ENCODE measurements at regions of chr4 and their contacts with region 1.

Region 1: DNA sequence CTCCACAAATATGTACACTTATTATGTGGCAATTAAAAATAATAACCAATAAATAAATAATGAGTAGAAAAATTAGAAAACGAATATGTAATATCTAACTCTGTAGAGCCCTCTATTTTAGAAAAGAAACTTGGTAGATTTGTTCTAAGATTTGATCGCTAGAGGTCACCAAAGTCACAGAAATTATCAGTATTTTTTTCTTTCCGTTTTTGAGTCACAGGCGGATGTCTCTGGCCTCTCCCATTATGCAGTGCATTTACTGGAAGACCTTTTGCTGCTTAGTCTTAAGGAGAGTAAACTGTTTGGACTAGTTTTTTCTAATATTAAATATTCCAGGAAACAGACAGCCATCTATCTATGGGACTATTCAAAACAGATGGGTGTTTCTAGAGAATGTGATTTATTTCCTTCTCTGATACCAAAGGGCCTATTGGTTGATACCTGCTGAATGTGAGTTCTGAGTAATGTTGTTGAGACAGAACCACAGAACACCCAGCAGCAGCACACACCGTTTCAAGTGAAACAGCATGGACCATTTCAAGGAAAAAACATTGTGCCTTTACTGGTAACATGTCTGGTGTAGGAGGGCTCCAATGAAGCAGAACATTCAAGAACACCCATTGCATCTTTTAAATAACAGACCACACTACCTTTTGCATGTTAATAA is 34.0 kb upstream of the GYPA start:
- DNase-seq: peak; percentile 32
- H3K4me3 Mint-ChIP-seq: no peak overlapping the region
- H3K27ac Mint-ChIP-seq: peak overlapping the region; percentile 24
- H3K4me1 Mint-ChIP-seq: peaks cover 15% of the 10 kb centered on the region
- H3K27me3 Mint-ChIP-seq: peaks cover 4% of the 10 kb centered on the region

Region 2: DNA sequence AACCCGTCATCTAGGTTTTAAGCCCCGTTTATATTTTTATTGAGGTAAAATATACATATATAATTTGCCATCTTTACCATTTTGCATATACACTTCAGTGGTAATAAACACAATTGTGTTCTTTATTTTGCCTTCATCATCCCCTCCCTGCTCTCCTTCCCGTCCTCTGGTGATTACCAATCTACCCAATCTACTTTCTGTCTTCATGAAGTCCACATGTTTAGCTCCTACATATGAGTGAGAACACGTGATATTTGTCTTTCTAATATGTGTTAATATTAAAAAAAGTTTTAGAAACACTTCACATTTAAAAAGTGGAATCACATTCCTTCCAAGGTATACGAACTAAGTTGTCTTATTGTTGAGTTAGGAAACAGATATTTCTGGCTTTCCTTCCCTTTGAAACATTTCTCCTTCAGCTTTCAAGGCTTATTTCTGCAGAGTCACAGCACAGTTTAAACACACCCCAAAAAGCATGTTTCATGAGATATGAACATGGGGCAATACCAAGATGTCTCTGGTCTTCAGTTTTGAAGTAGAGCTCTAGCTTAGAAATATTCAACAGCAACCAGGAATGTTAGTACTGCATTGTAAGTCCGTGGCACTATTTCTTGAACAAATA is 69.9 kb before region 1 on chr4:
- CTCF ChIA-PET with region 1: no interaction called
- intact Hi-C with region 1: no loop called
- DNase-seq: no peak
- H3K4me3 Mint-ChIP-seq: no peak overlapping the region
- H3K27ac Mint-ChIP-seq: no peak overlapping the region
- H3K4me1 Mint-ChIP-seq: no peaks in the 10 kb centered on the region
- H3K27me3 Mint-ChIP-seq: peaks cover 7% of the 10 kb centered on the region

Region 3: GRCh38 chr4:144213371-144213770 is 38.8 kb after region 1 on chr4:
- CTCF ChIA-PET with region 1: no interaction called
- intact Hi-C with region 1: no loop called
- DNase-seq: no peak
- H3K4me3 Mint-ChIP-seq: no peak overlapping the region
- H3K27ac Mint-ChIP-seq: no peak overlapping the region
- H3K4me1 Mint-ChIP-seq: no peaks in the 10 kb centered on the region
- H3K27me3 Mint-ChIP-seq: no peaks in the 10 kb centered on the region

Region 4: GRCh38 chr4:144518181-144518902 is 343.8 kb after region 1 on chr4:
- CTCF ChIA-PET with region 1: no interaction called
- intact Hi-C with region 1: loop called (anchors 10 kb)
- DNase-seq: no peak
- H3K4me3 Mint-ChIP-seq: no peak overlapping the region
- H3K27ac Mint-ChIP-seq: no peak overlapping the region
- H3K4me1 Mint-ChIP-seq: no peaks in the 10 kb centered on the region
- H3K27me3 Mint-ChIP-seq: no peaks in the 10 kb centered on the region

Region 5: GRCh38 chr4:144787365-144788258 is 613.1 kb after region 1 on chr4:
- CTCF ChIA-PET with region 1: no interaction called
- intact Hi-C with region 1: loop called (anchors 1 kb)
- DNase-seq: no peak
- H3K4me3 Mint-ChIP-seq: no peak overlapping the region
- H3K27ac Mint-ChIP-seq: no peak overlapping the region
- H3K4me1 Mint-ChIP-seq: no peaks in the 10 kb centered on the region
- H3K27me3 Mint-ChIP-seq: peaks cover 2% of the 10 kb centered on the region

Region 6: GRCh38 chr4:145216535-145216934 is 1042.0 kb after region 1 on chr4:
- CTCF ChIA-PET with region 1: no interaction called
- intact Hi-C with region 1: loop called (anchors 10 kb)
- DNase-seq: no peak
- H3K4me3 Mint-ChIP-seq: no peak overlapping the region
- H3K27ac Mint-ChIP-seq: no peak overlapping the region
- H3K4me1 Mint-ChIP-seq: no peaks in the 10 kb centered on the region
- H3K27me3 Mint-ChIP-seq: peaks cover 4% of the 10 kb centered on the region

Region 7: DNA sequence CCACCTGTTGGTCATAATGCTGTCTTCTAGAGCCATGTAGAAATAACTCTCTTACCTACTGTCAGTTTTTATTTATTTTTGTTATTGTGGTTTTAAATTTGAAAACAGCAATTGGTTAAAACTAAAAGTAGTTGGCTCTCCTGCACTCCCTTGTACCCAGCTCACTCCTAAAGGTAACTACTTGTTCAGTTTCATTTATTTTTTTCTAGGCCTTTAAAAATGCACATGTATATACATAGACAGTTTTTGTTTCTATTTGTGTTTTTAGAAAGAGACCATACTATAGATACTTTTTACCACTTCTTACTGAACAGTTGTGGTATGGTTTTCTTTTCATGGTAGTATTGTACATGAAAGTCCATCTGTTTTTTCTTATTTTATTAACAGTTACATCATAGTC is 1323.9 kb after region 1 on chr4:
- CTCF ChIA-PET with region 1: no interaction called
- intact Hi-C with region 1: loop called (anchors 5 kb)
- DNase-seq: no peak
- H3K4me3 Mint-ChIP-seq: no peak overlapping the region
- H3K27ac Mint-ChIP-seq: no peak overlapping the region
- H3K4me1 Mint-ChIP-seq: peaks cover 2% of the 10 kb centered on the region
- H3K27me3 Mint-ChIP-seq: peaks cover 6% of the 10 kb centered on the region

Measured in activated naive CD4-positive, alpha-beta T cell treated with anti-CD3 and anti-CD28 coated beads for 36 hours (primary cell).